ENCODE measurements at regions of chr7 and their contacts with region 1.

Region 1: DNA sequence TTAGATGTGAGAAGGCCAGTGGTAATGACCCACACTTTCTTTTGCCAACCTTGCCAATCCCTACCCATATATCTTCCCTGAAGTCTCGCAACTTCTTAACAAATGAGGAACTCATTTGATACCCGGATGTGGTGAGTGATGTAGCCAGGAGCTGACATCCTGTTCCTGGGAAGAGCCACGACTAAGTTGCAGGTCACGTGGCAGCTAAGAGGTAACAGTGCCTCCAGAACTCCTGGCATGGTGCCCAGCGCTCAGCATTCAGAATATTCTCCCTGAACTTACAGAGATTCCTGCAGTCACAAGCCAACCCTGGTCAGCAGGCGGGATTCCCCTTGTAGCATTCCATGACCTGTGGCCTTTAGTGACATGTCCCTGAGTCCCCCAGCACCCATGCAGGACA is 282.5 kb downstream of the GALNT17 start:
- DNase-seq: peak; percentile 81
- ATAC-seq: peak; percentile 83

Region 2: GRCh38 chr7:71131256-71132126 is 283.0 kb before region 1 on chr7:
- intact Hi-C with region 1: loop called (anchors 10 kb)
- DNase-seq: peak; percentile 63
- ATAC-seq: peak; percentile 92

Region 3: DNA sequence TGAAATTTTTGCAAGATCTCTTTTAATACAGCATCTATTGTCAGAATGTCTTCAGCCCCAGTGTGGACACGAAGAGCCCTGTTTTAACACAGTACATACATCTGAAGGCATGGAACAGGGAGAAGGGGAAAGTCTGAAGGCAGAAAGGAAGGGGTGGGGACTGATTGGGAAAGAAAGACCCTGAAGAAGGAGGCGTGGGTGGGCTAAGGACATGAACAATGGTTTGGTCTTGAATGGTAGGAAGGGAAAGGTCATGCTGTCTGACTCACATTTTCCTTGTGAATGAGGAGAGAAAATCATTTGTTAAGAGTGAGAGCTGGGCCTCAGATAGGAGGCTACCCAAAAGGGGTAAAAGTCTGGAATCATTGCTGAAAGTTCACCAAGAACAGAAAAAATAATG is 14.6 kb after region 1 on chr7:
- intact Hi-C with region 1: no loop called
- DNase-seq: no peak
- ATAC-seq: no peak

Measured in Right ventricle myocardium superior (tissue), 1 donor.